Naive thymus-derived CD4-positive, alpha-beta T cell (primary cell): ENCODE measurements at regions of chr12 and their contacts with region 1.

Region 1: DNA sequence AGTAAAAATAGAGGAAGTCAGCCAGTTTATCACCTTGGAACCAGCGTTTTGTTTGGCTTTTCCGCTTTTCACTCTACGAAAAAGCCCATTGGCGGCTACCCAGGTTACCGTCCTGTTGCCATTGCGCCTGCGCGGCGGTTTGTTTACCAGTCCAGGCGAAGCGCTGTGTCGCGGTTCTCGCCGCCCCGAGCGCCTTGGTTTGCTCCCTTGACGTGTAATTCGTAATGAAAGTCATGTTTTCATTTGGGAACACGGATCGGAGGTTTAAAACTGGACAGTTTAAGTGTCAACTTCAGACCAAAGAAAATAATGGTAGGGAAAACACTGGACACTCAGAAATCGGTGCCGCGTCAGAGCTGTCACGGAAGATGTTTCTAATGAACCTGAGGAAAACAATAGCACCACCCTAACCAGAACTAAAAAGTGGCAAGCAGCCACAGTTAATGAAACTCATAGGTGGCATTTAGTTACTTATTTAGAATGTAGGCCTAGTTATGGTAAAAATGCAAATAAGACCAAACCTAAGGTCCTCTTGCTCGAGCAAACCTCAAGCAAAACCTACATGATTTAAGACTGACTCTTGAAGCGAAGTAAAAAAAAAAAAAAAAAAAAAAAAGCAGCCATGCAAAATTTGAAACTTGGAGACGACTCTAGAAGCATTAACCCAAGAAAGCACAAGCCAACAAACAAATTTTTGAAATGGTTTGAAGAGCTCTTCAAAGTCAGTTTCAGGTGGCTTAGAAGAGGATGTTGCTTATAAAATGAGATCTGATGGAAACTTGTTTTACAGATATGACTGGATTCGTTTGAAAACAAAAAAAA is 790 bp upstream of the GPR19 start:
- DNase-seq: peak; percentile 86 to 97 (median 92)
- ATAC-seq: peak; percentile 92
- H3K4me3 ChIP-seq: peak overlapping the region; percentile 63
- H3K4me3 Mint-ChIP-seq: peak overlapping the region; percentile 79 to 99 (median 95)
- H3K27ac ChIP-seq: peak overlapping the region; percentile 93
- H3K27ac Mint-ChIP-seq: peak overlapping the region; percentile 95 to 100 (median 100)
- H3K4me1 ChIP-seq: peaks cover 11 to 16% of the 10 kb centered on the region in 2 donors
- H3K4me1 Mint-ChIP-seq: peaks cover 24 to 63% (median 33%) of the 10 kb centered on the region in 7 donors
- H3K27me3 ChIP-seq: no peaks in the 10 kb centered on the region
- H3K27me3 Mint-ChIP-seq: no peaks in the 10 kb centered on the region

Region 2: DNA sequence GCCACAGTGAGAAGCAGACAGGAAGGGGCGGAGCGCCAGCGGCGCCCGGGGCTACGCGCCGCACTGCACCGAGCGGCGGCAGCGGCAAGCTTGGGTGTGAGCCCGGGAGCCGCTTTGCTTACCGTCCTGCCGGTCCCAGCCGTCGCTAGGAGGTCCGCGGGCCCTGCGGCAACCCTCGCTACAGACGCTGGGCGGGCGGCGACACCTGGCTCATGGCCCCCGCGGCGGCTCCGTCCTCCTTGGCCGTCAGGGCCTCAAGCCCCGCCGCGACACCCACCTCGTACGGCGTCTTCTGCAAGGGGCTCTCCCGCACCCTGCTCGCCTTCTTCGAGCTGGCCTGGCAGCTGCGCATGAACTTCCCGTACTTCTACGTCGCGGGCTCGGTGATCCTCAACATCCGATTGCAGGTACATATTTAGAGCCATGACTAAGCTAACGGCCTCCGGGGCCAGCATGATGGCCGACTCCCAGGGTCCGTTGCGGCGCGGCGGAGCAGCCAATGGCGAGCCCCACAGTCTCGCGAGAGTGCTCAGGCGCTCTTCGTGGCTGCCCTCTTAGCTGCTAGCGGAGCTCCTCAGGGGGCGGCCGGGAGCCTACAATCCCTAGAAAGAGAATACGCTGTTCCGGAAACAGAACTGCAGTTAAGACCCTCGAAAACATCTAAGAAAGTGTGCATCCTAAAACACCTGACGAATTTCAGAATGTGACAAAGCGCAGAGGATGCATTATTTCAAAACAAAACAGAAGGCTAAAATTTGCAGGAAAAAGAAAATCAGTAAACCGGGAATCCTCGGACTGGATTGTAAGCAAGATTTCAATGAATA is 1525.4 kb before region 1 on chr12 and contains the start of gene SMIM10L1:
- CTCF ChIA-PET with region 1: no interaction called
- POLR2A ChIA-PET with region 1: no interaction called
- intact Hi-C with region 1: loop called in 1 of 2 experiments (anchors 10 kb)
- DNase-seq: peak; percentile 77 to 88 (median 83)
- ATAC-seq: peak; percentile 97
- H3K4me3 ChIP-seq: peak within 1 kb of the TSS; percentile 74
- H3K4me3 Mint-ChIP-seq: peak within 1 kb of the TSS; percentile 94 to 100 (median 98)
- H3K27ac ChIP-seq: peak within 1 kb of the TSS; percentile 72
- H3K27ac Mint-ChIP-seq: peak within 1 kb of the TSS; percentile 97 to 100 (median 99)
- H3K4me1 ChIP-seq: peaks cover 30 to 36% of the 10 kb centered on the region in 2 donors
- H3K4me1 Mint-ChIP-seq: peaks cover 53 to 82% (median 72%) of the 10 kb centered on the region in 7 donors
- H3K27me3 ChIP-seq: no peaks in the 10 kb centered on the region
- H3K27me3 Mint-ChIP-seq: no peaks in the 10 kb centered on the region
- total RNA-seq, gene SMIM10L1: 7.8 to 12.9 (median 8.5) TPM

Region 3: DNA sequence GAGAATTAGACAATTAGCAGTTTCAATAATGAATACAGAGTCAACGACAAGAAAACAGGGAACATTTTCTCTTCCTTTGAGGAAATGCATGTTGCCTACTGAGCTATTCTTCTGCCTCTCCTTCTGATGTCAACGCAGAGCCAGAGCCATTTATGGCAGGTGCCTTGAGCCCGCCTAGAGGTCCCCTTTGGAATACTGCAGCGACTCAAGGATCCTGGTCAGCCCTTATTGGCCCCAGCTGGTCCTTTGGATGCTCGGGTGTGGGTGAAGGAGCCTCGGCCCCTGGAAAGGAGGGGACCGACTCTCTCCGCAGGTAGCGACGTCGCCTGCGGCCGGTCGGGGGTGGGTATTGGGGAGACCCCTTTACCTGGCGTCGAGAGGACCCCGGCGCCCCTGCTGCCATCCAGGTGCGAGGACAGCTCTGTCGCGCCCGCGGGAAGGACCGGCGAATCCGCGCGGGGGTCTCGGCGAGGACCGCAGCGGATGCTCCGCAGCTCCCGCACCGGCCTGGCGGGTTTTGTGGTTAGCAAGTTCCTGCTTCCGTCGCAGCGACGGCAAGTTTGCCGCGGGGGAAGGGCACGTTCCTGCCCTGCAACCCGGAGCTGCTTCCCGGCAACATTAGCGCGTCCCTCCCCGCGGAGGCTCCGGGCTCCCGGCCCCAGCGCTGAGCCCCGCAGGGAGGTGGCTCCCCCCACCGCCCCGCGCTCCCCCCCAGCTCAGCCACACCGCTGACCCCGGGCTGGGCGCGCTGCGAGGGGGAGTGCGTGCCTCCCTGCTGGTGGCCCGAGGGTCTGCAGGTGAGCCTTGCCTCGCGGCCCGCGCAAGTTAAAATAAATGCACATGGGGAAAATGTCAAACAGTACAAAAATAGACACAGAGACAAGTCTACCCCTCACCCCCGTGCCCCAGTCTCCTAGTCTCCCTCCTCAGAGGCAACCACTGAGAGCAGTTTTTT is 346.8 kb before region 1 on chr12 and contains the start of gene MANSC1:
- CTCF ChIA-PET with region 1: no interaction called
- POLR2A ChIA-PET with region 1: interaction called, 14 read pairs
- intact Hi-C with region 1: no loop called
- DNase-seq: peak; percentile 39 to 69 (median 68)
- ATAC-seq: peak; percentile 78
- H3K4me3 ChIP-seq: peak within 1 kb of the TSS; percentile 48
- H3K4me3 Mint-ChIP-seq: peak within 1 kb of the TSS; percentile 74 to 85 (median 81)
- H3K27ac ChIP-seq: peak within 1 kb of the TSS; percentile 69
- H3K27ac Mint-ChIP-seq: peak within 1 kb of the TSS in 8 of 9 donors; percentile 76 to 95 (median 89)
- H3K4me1 ChIP-seq: peaks cover 6 to 18% of the 10 kb centered on the region in 2 donors
- H3K4me1 Mint-ChIP-seq: peaks cover 26 to 68% (median 42%) of the 10 kb centered on the region in 7 donors
- H3K27me3 ChIP-seq: no peaks in the 10 kb centered on the region
- H3K27me3 Mint-ChIP-seq: peaks cover 0 to 7% (median 0%) of the 10 kb centered on the region in 5 donors
- total RNA-seq, gene MANSC1: 0.60 to 1.3 (median 0.94) TPM

Region 4: DNA sequence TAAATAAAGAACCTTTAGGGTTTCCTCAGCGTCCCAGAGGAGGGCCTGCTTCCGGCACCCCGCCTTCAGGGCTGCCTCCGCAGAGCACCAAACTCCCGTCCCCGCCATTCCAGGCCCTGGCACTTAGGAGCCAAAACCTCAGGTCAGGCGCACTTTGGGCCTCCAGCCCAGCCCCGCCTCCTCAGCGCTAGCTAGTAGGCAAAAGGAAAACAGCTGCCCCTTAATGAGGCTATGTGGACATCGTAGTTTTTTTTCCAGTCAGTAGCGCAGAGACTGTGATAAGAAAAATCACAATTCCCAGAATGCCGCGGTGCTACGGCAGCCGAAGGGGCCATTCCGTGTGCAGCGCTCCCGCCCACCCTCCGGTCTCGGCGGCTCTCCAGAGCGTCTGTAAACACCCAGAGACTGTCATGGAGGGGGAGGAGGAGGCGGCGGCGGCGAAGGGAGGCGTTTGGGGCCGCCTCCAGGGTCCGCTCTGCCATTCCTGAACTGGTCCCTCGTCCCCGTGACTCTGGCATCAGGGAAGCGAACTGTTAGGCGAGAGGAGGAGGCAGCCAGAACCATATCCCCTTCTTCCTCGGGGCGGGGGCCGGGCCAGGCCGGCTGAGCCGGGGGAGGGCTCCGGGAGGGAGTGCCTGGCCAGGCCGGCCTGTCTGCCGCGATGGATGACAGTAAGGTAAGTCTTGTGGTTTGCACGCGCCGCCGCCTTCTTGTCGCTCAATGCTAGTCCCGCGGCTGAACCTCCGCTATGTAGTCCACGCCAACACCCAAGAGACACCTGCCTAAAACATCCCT is 85.1 kb before region 1 on chr12 and contains the start of gene CREBL2:
- CTCF ChIA-PET with region 1: no interaction called
- POLR2A ChIA-PET with region 1: interaction called, 18 read pairs
- intact Hi-C with region 1: loop called (anchors 1 kb)
- DNase-seq: peak; percentile 61 to 91 (median 89)
- ATAC-seq: peak; percentile 97
- H3K4me3 ChIP-seq: peak within 1 kb of the TSS; percentile 94
- H3K4me3 Mint-ChIP-seq: peak within 1 kb of the TSS; percentile 84 to 99 (median 93)
- H3K27ac ChIP-seq: peak within 1 kb of the TSS; percentile 98
- H3K27ac Mint-ChIP-seq: peak within 1 kb of the TSS; percentile 91 to 100 (median 99)
- H3K4me1 ChIP-seq: peaks cover 12 to 18% of the 10 kb centered on the region in 2 donors
- H3K4me1 Mint-ChIP-seq: peaks cover 38 to 74% (median 57%) of the 10 kb centered on the region in 7 donors
- H3K27me3 ChIP-seq: no peaks in the 10 kb centered on the region
- H3K27me3 Mint-ChIP-seq: no peaks in the 10 kb centered on the region
- total RNA-seq, gene CREBL2: 17.3 to 39.5 (median 24.9) TPM

Region 5: GRCh38 chr12:12654691-12655460 is 41.9 kb before region 1 on chr12:
- CTCF ChIA-PET with region 1: interaction called, 6 read pairs
- POLR2A ChIA-PET with region 1: interaction called, 13 read pairs
- intact Hi-C with region 1: no loop called
- DNase-seq: no peak
- ATAC-seq: no peak
- H3K4me3 ChIP-seq: no peak overlapping the region
- H3K4me3 Mint-ChIP-seq: no peak overlapping the region
- H3K27ac ChIP-seq: no peak overlapping the region
- H3K27ac Mint-ChIP-seq: peak overlapping the region in 2 of 9 donors; percentile 10 to 53
- H3K4me1 ChIP-seq: no peaks in the 10 kb centered on the region
- H3K4me1 Mint-ChIP-seq: peaks cover 0 to 19% (median 13%) of the 10 kb centered on the region in 7 donors
- H3K27me3 ChIP-seq: no peaks in the 10 kb centered on the region
- H3K27me3 Mint-ChIP-seq: no peaks in the 10 kb centered on the region

Region 6: DNA sequence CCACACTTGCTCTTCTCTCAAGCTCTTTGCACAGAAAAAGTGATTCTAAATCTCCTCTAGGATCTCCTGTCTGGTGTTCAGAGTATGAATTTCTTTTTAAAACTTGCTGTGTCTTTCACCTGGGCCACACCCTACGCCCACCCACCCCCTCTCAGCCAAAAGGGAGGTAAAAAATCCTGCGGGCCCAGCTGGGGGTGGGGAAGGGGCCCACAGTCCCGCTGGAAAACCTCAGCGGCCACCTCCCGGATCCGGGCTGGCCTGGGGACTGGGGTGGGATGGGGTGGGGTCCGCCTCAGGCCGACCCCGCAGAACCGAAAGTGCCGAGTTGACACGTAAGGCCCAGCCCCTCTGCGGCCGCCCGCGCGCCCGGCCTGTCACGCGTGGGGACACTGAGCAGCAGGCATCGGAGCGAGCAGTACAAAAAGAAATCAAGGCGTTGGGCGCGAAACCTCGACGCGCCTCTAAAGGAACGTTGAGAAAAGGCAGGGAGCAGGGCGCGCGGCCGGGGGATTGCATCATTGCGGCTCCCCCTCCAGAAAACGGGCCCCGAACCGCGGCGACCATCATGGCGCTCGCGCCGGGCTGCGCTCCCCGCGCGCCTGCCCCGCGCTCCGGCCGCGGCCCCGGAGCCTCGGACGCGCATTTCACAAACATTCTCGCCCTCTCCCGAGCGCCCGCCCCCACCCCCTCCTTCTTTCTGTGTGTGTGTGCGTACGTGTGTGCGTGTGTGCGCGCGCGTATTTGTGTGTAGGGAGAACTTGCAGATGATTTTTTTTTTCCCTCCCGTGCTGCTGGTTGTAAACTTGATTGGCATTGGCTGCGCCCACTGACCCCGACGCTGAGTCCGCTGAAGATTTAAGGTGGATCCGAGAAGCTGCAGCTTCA is 28.1 kb after region 1 on chr12:
- CTCF ChIA-PET with region 1: interaction called, 4 read pairs
- POLR2A ChIA-PET with region 1: interaction called, 1,179 read pairs
- intact Hi-C with region 1: loop called (anchors 1 kb)
- DNase-seq: peak; percentile 78 to 97 (median 92)
- ATAC-seq: peak; percentile 77
- H3K4me3 ChIP-seq: peak overlapping the region; percentile 53
- H3K4me3 Mint-ChIP-seq: peak overlapping the region; percentile 87 to 98 (median 94)
- H3K27ac ChIP-seq: peak overlapping the region; percentile 99
- H3K27ac Mint-ChIP-seq: peak overlapping the region; percentile 96 to 99 (median 97)
- H3K4me1 ChIP-seq: peaks cover 28% of the 10 kb centered on the region in 2 donors
- H3K4me1 Mint-ChIP-seq: peaks cover 23 to 64% (median 56%) of the 10 kb centered on the region in 7 donors
- H3K27me3 ChIP-seq: no peaks in the 10 kb centered on the region
- H3K27me3 Mint-ChIP-seq: peaks cover 0 to 7% (median 0%) of the 10 kb centered on the region in 5 donors